Activated CD8-positive, alpha-beta memory T cell treated with anti-CD3 and anti-CD28 coated beads, Interleukin-2, amount 10 ng/mL, durations not matched to agents 7 days and 5 days (primary cell): ENCODE measurements at regions of chr10 and their contacts with region 1.

Region 1: GRCh38 chr10:89563861-89564478 is 28.6 kb upstream of the SLC16A12 start:
- DNase-seq: no peak
- ATAC-seq: peak; percentile 49
- H3K4me3 Mint-ChIP-seq: no peak overlapping the region
- H3K27ac Mint-ChIP-seq: no peak overlapping the region
- H3K4me1 Mint-ChIP-seq: no peaks in the 10 kb centered on the region
- H3K27me3 Mint-ChIP-seq: peaks cover 41% of the 10 kb centered on the region

Region 2: GRCh38 chr10:89428877-89429276 is 135.1 kb before region 1 on chr10:
- CTCF ChIA-PET with region 1: interaction called, 10 read pairs
- DNase-seq: no peak
- ATAC-seq: no peak
- H3K4me3 Mint-ChIP-seq: no peak overlapping the region
- H3K27ac Mint-ChIP-seq: no peak overlapping the region
- H3K4me1 Mint-ChIP-seq: no peaks in the 10 kb centered on the region
- H3K27me3 Mint-ChIP-seq: peaks cover 26% of the 10 kb centered on the region

Region 3: GRCh38 chr10:89518876-89519842 is 44.8 kb before region 1 on chr10:
- CTCF ChIA-PET with region 1: no interaction called
- DNase-seq: no peak
- ATAC-seq: no peak
- H3K4me3 Mint-ChIP-seq: no peak overlapping the region
- H3K27ac Mint-ChIP-seq: no peak overlapping the region
- H3K4me1 Mint-ChIP-seq: no peaks in the 10 kb centered on the region
- H3K27me3 Mint-ChIP-seq: peaks cover 10% of the 10 kb centered on the region

Region 4: DNA sequence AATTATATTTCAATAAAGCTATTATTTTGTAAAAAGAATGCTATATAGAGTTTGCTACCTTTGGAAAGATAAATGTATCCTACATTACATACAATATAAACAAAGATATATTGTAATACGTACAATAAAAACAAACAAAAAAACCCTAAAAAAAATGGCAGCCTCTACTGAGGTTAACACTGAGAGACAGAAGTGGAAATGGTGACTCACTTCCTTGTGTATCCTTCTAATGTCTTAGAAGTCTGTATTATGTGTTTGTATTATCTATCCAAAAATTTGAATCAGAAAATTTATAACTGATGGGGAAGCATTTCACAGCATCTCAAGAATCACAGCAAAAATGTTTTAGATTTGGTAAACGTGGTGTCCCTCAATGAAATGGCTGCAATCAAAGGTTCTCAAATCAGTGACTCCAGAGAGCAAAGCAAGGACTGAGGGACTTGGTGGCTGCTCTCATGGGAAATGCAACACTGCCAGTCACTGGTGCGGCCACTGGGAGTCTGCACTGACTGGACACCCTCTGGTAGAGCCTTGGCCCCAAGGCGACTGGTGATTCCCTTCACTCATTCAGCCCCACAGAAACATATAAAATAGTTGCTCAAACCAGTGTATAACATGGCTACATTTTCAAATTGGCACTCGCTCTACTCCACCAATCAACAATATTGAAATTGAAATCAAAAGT is 27.3 kb after region 1 on chr10:
- CTCF ChIA-PET with region 1: no interaction called
- DNase-seq: no peak
- ATAC-seq: no peak
- H3K4me3 Mint-ChIP-seq: no peak overlapping the region
- H3K27ac Mint-ChIP-seq: no peak overlapping the region
- H3K4me1 Mint-ChIP-seq: peaks cover 2% of the 10 kb centered on the region
- H3K27me3 Mint-ChIP-seq: no peaks in the 10 kb centered on the region